Posterior vena cava (tissue), 2 donors: ENCODE measurements at regions of chr9 and their contacts with region 1.

Region 1: GRCh38 chr9:117205806-117206205 is 209.1 kb downstream of the ASTN2 start:
- DNase-seq: no peak

Region 2: GRCh38 chr9:116549061-116549664 is 656.6 kb before region 1 on chr9:
- intact Hi-C with region 1: no loop called
- DNase-seq: peak; percentile 95

Region 3: DNA sequence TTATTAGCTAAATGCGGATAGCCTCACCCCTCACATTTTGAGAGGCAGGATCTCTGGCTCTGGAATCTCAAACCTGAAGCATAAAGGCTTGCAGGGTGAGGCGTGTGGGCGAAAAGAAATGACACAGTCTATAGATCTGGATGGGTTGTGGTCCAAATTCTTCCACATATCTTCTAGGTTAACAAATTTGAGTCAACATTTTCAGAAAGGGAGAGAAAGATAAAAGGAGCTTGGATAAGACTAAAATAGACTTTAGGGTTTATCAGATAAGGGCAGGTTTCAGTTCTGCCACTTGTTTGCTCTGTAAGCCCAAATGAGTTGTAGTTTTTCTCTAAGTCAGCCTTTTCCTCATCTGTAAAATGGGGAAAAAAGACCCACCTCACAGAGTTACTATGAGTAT is 297.8 kb before region 1 on chr9:
- intact Hi-C with region 1: loop called in 1 of 2 experiments (anchors 2 kb)
- DNase-seq: no peak